PC-9 (cell line): ENCODE measurements at regions of chr15 and their contacts with region 1.

Region 1: GRCh38 chr15:70670680-70671079 is 92.7 kb downstream of the UACA start:
- DNase-seq: no peak
- H3K4me3 ChIP-seq: no peak overlapping the region
- H3K27ac ChIP-seq: no peak overlapping the region
- H3K4me1 ChIP-seq: no peaks in the 10 kb centered on the region
- H3K27me3 ChIP-seq: no peaks in the 10 kb centered on the region
- CTCF ChIP-seq: peak; percentile 33; the same call in 1 of the 2 replicates

Region 2: DNA sequence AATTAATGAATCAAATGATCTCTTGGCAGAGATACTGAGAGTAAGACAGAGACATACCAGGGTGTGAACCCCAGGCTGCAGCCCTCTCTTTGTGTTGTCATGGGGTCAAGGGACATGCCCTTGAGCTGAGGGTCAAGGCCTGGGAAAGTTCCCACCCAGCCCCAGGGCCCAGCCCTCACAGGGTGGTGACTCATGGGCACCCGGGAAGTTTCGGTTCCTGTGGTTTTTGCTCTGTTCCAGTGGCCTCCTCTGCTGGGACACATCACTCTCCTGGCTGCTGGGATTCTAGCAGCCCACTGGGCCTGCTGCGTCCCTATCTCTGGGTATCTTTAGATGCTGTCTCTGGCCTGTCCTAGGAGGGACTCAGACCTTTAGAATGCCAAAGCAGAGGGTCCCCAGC is 424.7 kb before region 1 on chr15:
- CTCF ChIA-PET with region 1: no interaction called
- POLR2A ChIA-PET with region 1: no interaction called
- intact Hi-C with region 1: no loop called
- DNase-seq: peak; percentile 72 to 74
- H3K4me3 ChIP-seq: no peak overlapping the region
- H3K27ac ChIP-seq: peak overlapping the region; percentile 72
- H3K4me1 ChIP-seq: peaks cover 51% of the 10 kb centered on the region
- H3K27me3 ChIP-seq: no peaks in the 10 kb centered on the region
- CTCF ChIP-seq: no peak

Region 3: GRCh38 chr15:70722266-70723121 is 51.8 kb after region 1 on chr15:
- CTCF ChIA-PET with region 1: interaction called, 3 read pairs
- POLR2A ChIA-PET with region 1: no interaction called
- intact Hi-C with region 1: loop called (anchors 10 kb)
- DNase-seq: no peak
- H3K4me3 ChIP-seq: no peak overlapping the region
- H3K27ac ChIP-seq: no peak overlapping the region
- H3K4me1 ChIP-seq: no peaks in the 10 kb centered on the region
- H3K27me3 ChIP-seq: no peaks in the 10 kb centered on the region
- CTCF ChIP-seq: peak; percentile 81

Region 4: DNA sequence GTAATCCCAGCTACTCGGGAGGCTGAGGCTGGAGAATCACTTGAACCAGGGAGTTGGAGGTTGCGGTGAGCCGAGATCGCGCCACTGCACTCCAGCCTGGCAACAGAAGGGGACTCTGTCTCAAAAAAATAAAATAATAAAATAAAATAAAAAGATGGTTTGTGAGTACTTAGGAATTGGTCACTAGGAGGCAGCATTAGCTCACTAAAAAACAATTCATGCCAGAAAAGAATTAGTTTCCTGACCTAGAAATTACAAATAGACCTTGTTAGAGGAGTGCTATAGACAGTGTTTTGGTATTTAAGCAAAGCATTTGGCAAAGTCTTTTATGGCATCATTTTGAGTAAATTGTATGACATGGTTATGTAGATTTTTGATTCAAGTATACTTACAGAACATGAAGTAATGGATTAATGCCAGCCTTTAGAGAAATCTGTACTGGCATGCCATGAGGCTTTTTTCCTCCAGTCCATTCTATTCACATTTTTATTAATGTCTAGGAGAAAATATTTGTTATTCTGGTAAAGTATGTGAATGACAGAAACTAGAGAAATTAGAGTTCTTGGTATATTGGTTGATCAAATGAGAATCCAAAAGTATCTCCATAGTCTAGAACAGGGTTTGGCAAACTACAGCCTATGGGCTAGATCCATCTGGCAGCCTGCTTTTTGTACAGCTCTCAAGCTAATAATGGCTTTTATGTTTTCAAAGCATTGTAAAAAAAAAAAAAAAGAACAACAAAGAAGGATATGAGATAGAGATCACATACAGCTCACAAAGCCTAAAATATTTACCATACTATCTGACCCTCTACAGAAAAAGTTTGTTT is 303.5 kb after region 1 on chr15:
- CTCF ChIA-PET with region 1: no interaction called
- POLR2A ChIA-PET with region 1: no interaction called
- intact Hi-C with region 1: loop called (anchors 10 kb)
- DNase-seq: peak in 1 of 2 experiments; percentile 1
- H3K4me3 ChIP-seq: no peak overlapping the region
- H3K27ac ChIP-seq: no peak overlapping the region
- H3K4me1 ChIP-seq: no peaks in the 10 kb centered on the region
- H3K27me3 ChIP-seq: no peaks in the 10 kb centered on the region
- CTCF ChIP-seq: peak; percentile 67

Region 5: DNA sequence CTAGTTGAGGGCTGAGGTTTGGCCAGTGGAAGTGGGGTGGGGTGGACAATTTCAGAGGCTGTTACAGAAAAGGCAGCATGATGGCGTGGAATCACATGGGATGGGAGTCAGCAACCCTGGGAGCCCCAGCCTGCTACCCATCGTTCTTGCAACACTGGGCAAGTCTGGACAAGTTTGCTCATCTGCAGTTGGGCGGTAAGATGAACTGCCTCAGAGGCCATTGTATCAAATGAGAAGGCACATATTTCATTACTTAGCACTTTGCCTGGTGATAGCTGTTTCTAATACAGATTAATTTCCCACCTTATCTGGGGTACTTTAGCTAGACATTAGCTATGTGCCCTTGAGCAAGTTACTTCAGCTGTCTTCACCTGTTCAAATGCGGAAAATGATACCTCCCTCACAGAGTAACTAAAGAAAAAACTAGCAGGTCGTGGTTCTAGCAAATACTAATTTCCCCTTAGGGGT is 693.5 kb after region 1 on chr15:
- CTCF ChIA-PET with region 1: no interaction called
- POLR2A ChIA-PET with region 1: interaction called, 14 read pairs
- intact Hi-C with region 1: no loop called
- DNase-seq: no peak
- H3K4me3 ChIP-seq: no peak overlapping the region
- H3K27ac ChIP-seq: no peak overlapping the region
- H3K4me1 ChIP-seq: no peaks in the 10 kb centered on the region
- H3K27me3 ChIP-seq: no peaks in the 10 kb centered on the region
- CTCF ChIP-seq: no peak

Region 6: GRCh38 chr15:71448688-71449114 is 778.0 kb after region 1 on chr15:
- CTCF ChIA-PET with region 1: no interaction called
- POLR2A ChIA-PET with region 1: no interaction called
- intact Hi-C with region 1: loop called (anchors 10 kb)
- DNase-seq: peak; percentile 47
- H3K4me3 ChIP-seq: no peak overlapping the region
- H3K27ac ChIP-seq: no peak overlapping the region
- H3K4me1 ChIP-seq: peaks cover 46% of the 10 kb centered on the region
- H3K27me3 ChIP-seq: no peaks in the 10 kb centered on the region
- CTCF ChIP-seq: peak; percentile 83